Mucosa of descending colon (tissue), 3 donors: ENCODE measurements at regions of chr9 and their contacts with region 1.

Region 1: GRCh38 chr9:110152704-110153374 is 55.1 kb downstream of the C9orf152 start:
- DNase-seq: peak in 1 of 3 donors; percentile 60
- ATAC-seq: peak; percentile 47
- H3K4me3 ChIP-seq: no peak overlapping the region
- H3K4me1 ChIP-seq: no peaks in the 10 kb centered on the region
- CTCF ChIP-seq: peak; percentile 20

Region 2: DNA sequence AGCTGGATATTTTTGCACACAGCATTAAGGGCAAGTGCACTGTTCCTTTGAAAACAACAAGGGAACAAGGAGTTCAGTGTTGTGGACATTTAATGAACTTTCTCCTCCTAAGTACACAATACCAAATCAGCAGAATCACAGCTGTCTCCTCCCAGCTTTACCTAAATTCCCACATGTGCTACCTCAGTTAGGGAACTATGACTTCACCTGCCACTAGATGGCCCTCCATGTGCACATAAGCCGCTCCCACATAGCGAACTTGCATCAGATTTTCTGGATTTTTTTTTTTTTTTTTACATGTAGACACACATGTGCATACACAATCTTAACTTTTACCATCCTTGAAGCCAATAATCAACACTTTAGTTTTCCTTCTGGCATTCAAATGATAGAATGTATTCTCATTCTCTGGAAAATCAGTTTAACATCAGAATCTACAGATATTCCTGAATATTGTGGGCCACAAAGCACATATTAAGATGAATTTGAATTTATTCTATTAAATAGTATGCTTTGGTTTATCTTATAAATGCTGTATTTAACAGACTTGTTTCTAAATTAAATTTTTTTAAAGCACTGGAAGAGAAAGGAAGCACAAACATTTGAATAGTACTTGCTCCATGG is 249.2 kb before region 1 on chr9:
- intact Hi-C with region 1: loop called (anchors 5 kb)
- DNase-seq: peak in 1 of 3 donors; percentile 88
- ATAC-seq: peak; percentile 70
- H3K4me3 ChIP-seq: no peak overlapping the region
- H3K4me1 ChIP-seq: peaks cover 15% of the 10 kb centered on the region
- CTCF ChIP-seq: peak; percentile 47

Region 3: GRCh38 chr9:110048403-110048975 is 104.3 kb before region 1 on chr9:
- intact Hi-C with region 1: loop called in 1 of 2 experiments (anchors 10 kb)
- DNase-seq: peak; percentile 76 to 89 (median 76)
- ATAC-seq: peak; percentile 93
- H3K4me3 ChIP-seq: peak overlapping the region; percentile 25
- H3K4me1 ChIP-seq: peaks cover 11% of the 10 kb centered on the region
- CTCF ChIP-seq: no peak

Region 4: DNA sequence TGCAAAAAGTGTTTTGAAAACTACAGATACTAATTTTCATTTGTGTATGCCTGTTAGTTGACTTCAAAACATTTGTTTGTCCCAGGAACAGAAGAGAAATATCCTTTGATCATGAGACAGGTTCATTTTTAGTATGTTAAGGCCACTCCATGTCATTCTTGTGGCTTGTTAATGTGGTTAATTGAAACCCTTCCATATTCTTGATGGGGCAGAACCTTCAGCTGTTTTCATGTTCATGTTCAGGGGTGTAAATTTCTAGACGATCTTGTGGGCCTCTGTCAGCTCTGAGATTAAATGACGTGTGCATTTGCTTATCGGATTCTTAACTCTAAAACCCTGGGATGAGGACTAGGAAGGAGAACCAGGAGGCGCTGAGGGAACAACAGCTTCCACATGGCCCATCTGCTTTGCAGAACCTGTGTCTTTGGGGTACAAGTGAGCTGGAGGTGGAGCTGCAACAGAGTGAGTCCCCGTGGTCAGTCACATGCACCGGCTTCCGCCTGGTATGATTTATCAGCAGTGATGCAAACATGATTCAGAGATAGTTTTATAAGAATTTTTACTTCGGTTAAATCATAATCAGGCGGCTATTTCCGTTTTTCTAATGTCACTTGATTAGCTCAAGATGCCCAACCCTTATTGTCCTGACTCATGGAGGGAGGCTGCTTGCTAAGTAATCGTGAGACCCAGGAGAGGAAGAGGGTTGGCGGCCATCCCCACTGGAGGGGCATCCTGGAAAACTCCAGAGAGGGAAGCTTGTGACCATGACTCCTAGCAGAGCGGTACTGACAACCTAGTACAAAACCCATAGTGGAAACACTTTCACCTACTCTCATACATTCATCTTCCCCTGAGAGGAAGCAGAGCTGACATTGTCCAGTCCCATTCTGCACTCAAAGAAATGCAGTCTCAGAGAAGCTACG is 83.3 kb before region 1 on chr9:
- intact Hi-C with region 1: loop called in 1 of 2 experiments (anchors 10 kb)
- DNase-seq: no peak
- ATAC-seq: peak; percentile 35
- H3K4me3 ChIP-seq: no peak overlapping the region
- H3K4me1 ChIP-seq: no peaks in the 10 kb centered on the region
- CTCF ChIP-seq: no peak

Region 5: DNA sequence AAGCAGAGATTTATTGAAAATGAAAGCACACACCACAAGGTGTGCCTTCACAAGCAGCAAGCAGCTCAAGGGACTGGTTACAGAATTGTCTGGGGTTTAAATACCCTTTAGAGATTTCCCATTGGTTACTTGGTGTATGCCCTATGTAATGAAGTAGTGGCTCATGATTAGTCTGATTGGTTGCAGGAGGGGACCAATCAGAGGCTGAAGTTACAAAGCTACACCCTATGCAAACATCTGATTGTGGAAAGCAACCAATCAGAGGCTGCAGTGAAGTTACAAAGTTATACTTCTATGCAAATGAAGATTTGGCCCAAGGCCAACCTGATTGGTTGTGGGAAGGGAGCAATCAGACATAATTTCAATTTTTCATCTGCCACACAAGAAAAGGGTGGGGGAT is 64.7 kb before region 1 on chr9:
- intact Hi-C with region 1: no loop called
- DNase-seq: no peak
- ATAC-seq: no peak
- H3K4me3 ChIP-seq: no peak overlapping the region
- H3K4me1 ChIP-seq: peaks cover 7% of the 10 kb centered on the region
- CTCF ChIP-seq: no peak

Region 6: DNA sequence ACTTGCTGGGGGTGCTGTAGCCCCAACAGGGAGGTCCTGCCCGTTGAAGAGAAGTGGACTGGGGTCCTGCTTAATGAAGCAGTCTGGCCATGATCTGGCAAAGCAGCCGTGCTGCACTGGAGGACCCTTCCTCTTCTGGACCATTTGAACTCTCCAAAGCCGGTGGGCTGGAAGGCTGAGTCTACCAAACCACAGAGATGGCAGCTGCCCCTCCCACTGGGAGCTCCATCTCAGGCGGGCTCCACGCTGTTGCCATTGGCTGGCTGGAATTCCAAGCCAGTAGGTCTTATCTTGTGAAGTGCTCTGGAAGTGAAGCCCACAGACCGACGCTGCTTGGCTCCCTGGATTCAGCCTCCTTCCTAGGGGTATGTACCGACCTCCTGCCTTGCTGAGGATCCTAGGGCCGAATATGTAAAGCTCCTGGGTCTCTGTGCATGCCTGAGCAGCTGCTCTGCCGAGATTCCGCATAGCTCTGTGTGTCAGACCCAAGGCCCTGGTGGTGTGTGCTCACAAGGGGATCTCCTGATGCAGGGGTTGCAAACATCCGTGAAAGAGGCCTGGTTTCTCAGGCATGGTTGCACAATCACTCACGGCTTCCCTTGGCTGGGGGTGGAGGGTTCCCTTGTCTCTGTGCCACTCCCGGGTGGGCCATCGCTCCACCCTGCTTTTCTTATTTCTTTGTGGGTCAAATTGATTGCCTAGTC is 446.5 kb after region 1 on chr9:
- intact Hi-C with region 1: no loop called
- DNase-seq: no peak
- ATAC-seq: no peak
- H3K4me3 ChIP-seq: no peak overlapping the region
- H3K4me1 ChIP-seq: no peaks in the 10 kb centered on the region
- CTCF ChIP-seq: no peak